ENCODE measurements at regions of chr9 and their contacts with region 1.

Region 1: GRCh38 chr9:98536542-98537173 is 172.1 kb downstream of the GABBR2 start:
- H3K4me3 ChIP-seq: no peak overlapping the region
- H3K27ac ChIP-seq: no peak overlapping the region
- H3K4me1 ChIP-seq: no peaks in the 10 kb centered on the region
- CTCF ChIP-seq: no peak

Region 2: DNA sequence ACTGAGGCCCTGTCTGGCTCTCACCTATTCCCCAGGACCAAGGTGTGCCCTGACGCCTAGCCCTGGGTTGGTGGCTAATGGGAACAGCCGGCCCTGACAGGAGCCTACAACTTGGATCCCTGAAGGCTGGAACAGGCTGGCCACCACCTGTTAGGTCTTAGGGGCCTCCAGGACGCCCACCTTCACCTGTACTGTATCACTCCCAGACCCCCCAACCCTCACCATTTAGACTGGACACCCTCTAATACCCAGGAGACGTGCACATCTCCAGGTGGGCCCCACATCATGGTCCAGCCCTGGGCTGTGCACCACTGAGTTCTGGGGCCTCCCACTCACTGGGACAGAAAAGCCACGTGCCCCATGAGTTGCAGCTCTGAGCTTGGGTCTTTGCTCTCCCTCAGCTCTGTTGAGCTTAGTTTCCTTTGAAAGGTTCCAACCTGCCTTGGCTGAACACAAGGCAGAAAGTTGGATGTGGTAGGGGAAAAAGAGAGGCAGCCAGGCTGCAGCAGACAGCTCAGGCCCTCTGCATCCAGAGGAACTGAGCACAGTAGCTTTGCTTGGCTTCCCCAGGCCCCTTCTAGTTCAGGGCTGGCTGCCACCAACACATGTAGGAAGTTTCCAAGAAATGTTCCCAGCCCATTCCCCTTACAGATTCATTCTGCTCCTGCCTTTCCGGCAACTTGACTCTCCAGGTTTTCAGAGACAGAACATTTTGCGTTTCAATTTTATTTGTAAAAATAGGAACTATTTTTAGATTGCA is 164.4 kb before region 1 on chr9:
- CTCF ChIA-PET with region 1: no interaction called
- POLR2A ChIA-PET with region 1: no interaction called
- H3K4me3 ChIP-seq: no peak overlapping the region
- H3K27ac ChIP-seq: no peak overlapping the region
- H3K4me1 ChIP-seq: no peaks in the 10 kb centered on the region
- CTCF ChIP-seq: no peak

Region 3: DNA sequence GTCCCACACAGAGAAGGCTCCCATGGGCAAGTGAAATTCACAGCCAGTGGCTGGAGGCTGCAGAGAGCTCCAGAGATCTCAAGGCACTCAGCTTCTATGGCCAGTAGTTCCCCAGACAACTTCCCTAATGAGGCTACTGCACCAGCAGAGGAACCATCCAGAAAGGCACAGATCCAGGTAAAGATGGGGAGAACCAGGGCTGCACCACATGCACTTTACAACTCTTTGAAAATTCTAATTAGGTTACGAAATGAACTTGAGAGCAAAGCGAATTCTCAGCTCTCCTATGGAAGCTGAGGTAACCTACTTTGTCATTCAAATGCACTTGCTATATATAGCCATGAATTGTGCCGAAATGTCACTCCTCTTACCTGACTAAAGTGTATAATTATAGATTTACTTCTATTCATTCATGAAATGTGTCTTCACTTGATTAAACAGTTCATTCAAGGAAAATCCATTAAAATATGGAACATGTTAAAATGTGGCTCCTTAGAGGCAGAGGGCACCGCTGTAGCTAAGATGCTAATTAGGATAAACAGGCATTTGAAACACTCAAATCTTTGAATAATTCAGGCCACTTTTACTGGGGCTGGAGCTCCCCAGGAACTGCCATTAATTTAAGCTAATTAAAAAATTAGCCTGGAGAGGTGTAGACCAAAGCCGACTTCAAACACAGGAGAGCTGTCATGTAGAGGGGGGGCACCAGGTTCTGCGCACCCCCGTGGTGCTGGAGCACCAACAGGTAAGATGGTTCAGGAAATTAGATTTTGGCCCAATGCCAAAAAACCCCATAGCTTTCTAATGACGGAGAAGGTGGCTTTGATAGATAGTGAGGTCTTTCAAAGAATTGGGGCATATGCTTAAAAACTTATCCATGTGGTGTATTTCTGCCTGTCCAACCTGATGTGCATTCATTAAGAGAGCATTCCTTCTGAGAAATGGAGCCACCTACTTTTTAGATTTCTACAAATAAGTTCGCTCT is 32.1 kb before region 1 on chr9:
- CTCF ChIA-PET with region 1: no interaction called
- POLR2A ChIA-PET with region 1: no interaction called
- H3K4me3 ChIP-seq: no peak overlapping the region
- H3K27ac ChIP-seq: no peak overlapping the region
- H3K4me1 ChIP-seq: no peaks in the 10 kb centered on the region
- CTCF ChIP-seq: no peak

Region 4: DNA sequence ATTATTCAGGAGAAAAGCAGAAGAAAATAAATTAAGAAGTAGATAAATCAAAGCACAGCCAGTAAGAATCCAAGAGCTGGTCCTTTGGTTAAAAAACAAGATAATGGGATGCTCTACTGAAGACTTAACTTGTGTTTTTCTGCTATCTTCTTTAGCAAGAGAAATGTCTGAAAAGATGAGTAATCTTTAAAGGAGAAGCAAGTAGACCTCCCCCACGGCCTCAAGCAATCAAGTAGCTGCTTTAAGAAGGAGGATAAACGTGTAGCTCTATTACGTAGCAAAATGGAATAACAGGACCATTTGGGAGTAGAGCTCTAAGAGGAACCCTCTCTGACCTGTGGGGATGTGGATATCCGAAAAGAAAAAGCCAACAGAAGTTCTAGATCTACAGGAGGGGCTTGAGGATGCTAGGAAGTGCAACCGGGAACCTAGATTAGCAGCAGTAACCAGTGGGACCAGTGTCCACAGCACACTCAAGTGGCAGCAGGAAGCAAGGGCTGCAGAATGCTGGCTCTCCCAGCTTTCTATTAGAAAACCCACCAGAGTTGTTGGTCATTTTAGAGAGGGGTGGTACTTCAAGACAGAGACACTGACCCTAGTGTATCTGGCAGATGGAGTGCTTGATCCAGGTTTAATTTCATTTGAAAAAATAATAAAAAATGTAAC is 13.3 kb before region 1 on chr9:
- CTCF ChIA-PET with region 1: interaction called, 15 read pairs
- POLR2A ChIA-PET with region 1: no interaction called
- H3K4me3 ChIP-seq: no peak overlapping the region
- H3K27ac ChIP-seq: no peak overlapping the region
- H3K4me1 ChIP-seq: no peaks in the 10 kb centered on the region
- CTCF ChIP-seq: no peak

Region 5: GRCh38 chr9:98742325-98743280 is 205.9 kb after region 1 on chr9:
- CTCF ChIA-PET with region 1: no interaction called
- POLR2A ChIA-PET with region 1: no interaction called
- H3K4me3 ChIP-seq: no peak overlapping the region
- H3K27ac ChIP-seq: no peak overlapping the region
- H3K4me1 ChIP-seq: no peaks in the 10 kb centered on the region
- CTCF ChIP-seq: no peak